A673 (cell line): ENCODE measurements at regions of chr5 and their contacts with region 1.

Region 1: GRCh38 chr5:142053426-142054151 is 40.8 kb upstream of the GNPDA1 start:
- DNase-seq: peak; percentile 98
- H3K4me3 ChIP-seq: no peak overlapping the region
- H3K27ac ChIP-seq: peak overlapping the region; percentile 83
- H3K4me1 ChIP-seq: peaks cover 55% of the 10 kb centered on the region
- H3K27me3 ChIP-seq: no peaks in the 10 kb centered on the region
- CTCF ChIP-seq: no peak

Region 2: DNA sequence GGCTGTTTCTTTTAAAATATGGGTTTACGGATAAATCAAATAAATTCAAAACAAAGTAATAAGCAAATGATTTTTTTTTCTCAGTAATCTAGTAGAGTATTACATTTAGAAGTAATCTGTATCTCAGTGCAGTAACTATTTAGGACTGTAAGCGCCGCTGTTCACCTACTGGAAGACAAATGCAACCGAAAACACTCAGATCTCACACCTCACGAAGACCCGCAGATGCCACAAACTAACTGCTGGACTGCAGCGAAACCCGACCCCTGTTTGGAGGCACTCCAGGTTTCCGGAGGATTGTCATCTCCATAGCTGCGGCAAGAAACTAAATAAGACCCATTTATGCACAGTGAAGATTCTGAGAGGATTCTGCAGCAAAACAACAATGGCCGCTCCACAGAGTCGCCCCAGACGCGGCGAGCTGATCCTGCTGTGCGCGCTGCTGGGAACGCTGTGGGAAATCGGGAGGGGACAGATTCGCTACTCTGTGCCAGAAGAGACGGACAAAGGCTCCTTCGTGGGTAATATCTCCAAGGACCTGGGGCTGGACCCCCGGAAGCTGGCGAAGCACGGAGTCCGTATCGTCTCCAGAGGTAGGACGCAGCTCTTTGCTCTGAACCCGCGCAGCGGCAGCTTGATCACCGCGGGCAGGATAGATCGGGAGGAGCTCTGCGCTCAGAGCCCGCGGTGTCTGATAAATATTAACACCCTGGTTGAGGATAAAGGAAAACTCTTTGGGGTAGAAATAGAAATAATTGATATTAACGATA is 661.0 kb before region 1 on chr5 and contains the start of gene PCDHGA8:
- CTCF ChIA-PET with region 1: no interaction called
- POLR2A ChIA-PET with region 1: interaction called, 11 read pairs
- intact Hi-C with region 1: no loop called
- DNase-seq: peak; percentile 71
- H3K4me3 ChIP-seq: no peak within 1 kb of the TSS
- H3K27ac ChIP-seq: no peak within 1 kb of the TSS
- H3K4me1 ChIP-seq: no peaks in the 10 kb centered on the region
- H3K27me3 ChIP-seq: no peaks in the 10 kb centered on the region
- CTCF ChIP-seq: peak; percentile 44
- total RNA-seq, gene PCDHGA8: 2.2 and 2.6 TPM in 2 replicates